Heart right ventricle (tissue), 16 donors: ENCODE measurements at regions of chr7 and their contacts with region 1.

Region 1: GRCh38 chr7:120857588-120858573 is at the start of gene TSPAN12:
- DNase-seq: peak; percentile 86 to 88
- ATAC-seq: peak; percentile 93 to 97 (median 94)
- H3K4me3 ChIP-seq: peak within 1 kb of the TSS; percentile 48 to 87 (median 72)
- H3K27ac ChIP-seq: peak within 1 kb of the TSS; percentile 88 to 98 (median 92)
- H3K4me1 ChIP-seq: peaks cover 0 to 37% (median 15%) of the 10 kb centered on the region in 9 donors
- H3K27me3 ChIP-seq: peaks cover 0 to 53% (median 0%) of the 10 kb centered on the region in 7 donors
- CTCF ChIP-seq: peak; percentile 60 to 88 (median 79)
- total RNA-seq, gene TSPAN12: 35.2 to 78.6 (median 64.5) TPM

Region 2: DNA sequence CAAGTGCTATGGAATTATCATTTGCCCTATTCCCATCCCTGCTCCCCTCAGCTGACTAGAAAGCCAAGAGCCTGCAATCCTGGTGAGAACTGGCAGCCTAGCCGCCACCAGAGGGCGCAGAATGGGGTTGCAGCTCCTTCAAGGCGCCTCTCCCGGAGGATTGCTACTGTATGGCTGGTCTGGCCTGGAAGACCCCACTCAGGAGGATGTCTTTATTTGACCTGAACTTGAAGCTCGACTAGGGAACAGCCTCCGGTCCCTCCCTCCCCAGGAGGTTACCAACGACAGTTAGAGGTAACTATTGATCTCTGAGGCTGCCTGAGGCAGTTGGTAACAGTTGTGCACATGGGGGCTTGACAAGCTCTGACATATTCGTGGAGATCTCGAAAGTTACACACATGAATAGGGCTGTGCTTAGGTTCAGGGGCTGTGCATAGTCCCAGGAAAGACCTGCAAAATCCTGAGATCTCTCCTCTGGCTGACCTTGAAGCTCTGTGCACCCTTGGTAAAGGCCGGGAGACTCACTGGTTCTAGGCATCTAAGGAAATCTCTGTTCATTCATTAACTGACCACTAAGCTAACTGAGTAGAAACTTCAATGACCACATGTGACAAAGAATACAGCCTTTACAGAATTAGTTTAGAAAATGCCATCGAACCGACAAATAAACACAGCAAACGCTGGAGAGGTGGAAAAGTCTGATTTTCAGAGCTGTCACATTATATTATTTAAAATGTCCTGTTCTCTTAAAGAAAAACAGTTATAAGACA is 65.6 kb before region 1 on chr7:
- intact Hi-C with region 1: loop called in 1 of 10 experiments (anchors 5 kb)
- DNase-seq: peak; percentile 70 to 79
- ATAC-seq: peak; percentile 74 to 93 (median 86)
- H3K4me3 ChIP-seq: no peak overlapping the region
- H3K27ac ChIP-seq: no peak overlapping the region
- H3K4me1 ChIP-seq: peaks cover 0 to 47% (median 16%) of the 10 kb centered on the region in 9 donors
- H3K27me3 ChIP-seq: no peaks in the 10 kb centered on the region
- CTCF ChIP-seq: peak; percentile 68 to 93 (median 85)

Region 3: DNA sequence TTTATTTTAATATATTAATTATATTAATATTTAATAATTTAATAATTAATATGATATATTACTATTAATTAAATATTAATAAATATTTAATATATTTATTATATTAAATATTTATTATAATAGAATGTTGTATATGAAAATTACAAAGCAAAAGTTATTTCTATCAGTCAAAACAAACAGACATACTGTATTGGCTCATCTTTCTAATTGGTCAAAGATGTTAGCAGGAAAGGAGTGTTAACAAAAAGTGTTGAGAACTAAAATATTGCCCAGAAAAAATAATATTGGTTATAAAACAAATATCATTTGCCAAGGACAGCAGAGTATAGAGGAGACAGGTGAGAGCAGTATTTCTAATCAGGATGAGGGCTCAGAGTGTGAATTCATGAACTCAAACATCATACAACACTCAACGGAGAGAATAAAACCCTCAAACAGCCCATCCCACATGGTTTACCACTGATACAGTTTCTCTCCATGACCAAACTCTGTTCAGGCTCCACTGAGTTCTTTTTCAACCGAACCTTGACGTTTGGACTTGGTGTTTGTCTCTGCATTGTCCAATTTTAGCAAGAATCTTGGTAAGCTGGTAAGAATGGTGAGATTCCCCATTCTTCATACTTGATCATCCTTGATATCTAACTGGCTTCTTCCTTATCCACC is 57.9 kb before region 1 on chr7:
- intact Hi-C with region 1: loop called in 6 of 10 experiments (anchors 5 kb)
- DNase-seq: no peak
- ATAC-seq: no peak
- H3K4me3 ChIP-seq: no peak overlapping the region
- H3K27ac ChIP-seq: no peak overlapping the region
- H3K4me1 ChIP-seq: peaks cover 0 to 27% (median 14%) of the 10 kb centered on the region in 9 donors
- H3K27me3 ChIP-seq: no peaks in the 10 kb centered on the region
- CTCF ChIP-seq: no peak

Region 4: GRCh38 chr7:120805636-120806388 is 52.1 kb before region 1 on chr7:
- intact Hi-C with region 1: loop called in 7 of 10 experiments (anchors 2 to 5 kb)
- DNase-seq: peak in 1 of 2 donors; percentile 78
- ATAC-seq: peak in 6 of 8 donors; percentile 47 to 65 (median 64)
- H3K4me3 ChIP-seq: no peak overlapping the region
- H3K27ac ChIP-seq: no peak overlapping the region
- H3K4me1 ChIP-seq: peaks cover 0 to 35% (median 17%) of the 10 kb centered on the region in 9 donors
- H3K27me3 ChIP-seq: no peaks in the 10 kb centered on the region
- CTCF ChIP-seq: peak; percentile 82 to 96 (median 87)

Region 5: GRCh38 chr7:120819863-120820262 is 38.0 kb before region 1 on chr7:
- intact Hi-C with region 1: no loop called
- DNase-seq: no peak
- ATAC-seq: no peak
- H3K4me3 ChIP-seq: no peak overlapping the region
- H3K27ac ChIP-seq: no peak overlapping the region
- H3K4me1 ChIP-seq: peaks cover 0 to 12% (median 0%) of the 10 kb centered on the region in 9 donors
- H3K27me3 ChIP-seq: no peaks in the 10 kb centered on the region
- CTCF ChIP-seq: peak in 1 of 9 donors; percentile 7

Region 6: GRCh38 chr7:120941064-120941463 is 83.2 kb after region 1 on chr7:
- intact Hi-C with region 1: loop called in 5 of 10 experiments (anchors 5 to 10 kb)
- DNase-seq: no peak
- ATAC-seq: peak in 2 of 8 donors; percentile 51 to 64
- H3K4me3 ChIP-seq: no peak overlapping the region
- H3K27ac ChIP-seq: peak overlapping the region in 2 of 10 donors; percentile 22 to 23
- H3K4me1 ChIP-seq: peaks cover 0 to 9% (median 0%) of the 10 kb centered on the region in 9 donors
- H3K27me3 ChIP-seq: no peaks in the 10 kb centered on the region
- CTCF ChIP-seq: peak in 7 of 9 donors; percentile 30 to 63 (median 51)

Region 7: GRCh38 chr7:120950539-120951308 is 92.8 kb after region 1 on chr7 and contains the start of gene ING3:
- intact Hi-C with region 1: loop called in 5 of 10 experiments (anchors 2 to 5 kb)
- DNase-seq: peak; percentile 96 to 98
- ATAC-seq: peak; percentile 98 to 99 (median 99)
- H3K4me3 ChIP-seq: peak within 1 kb of the TSS; percentile 61 to 79 (median 71)
- H3K27ac ChIP-seq: peak within 1 kb of the TSS; percentile 94 to 98 (median 96)
- H3K4me1 ChIP-seq: peaks cover 0 to 33% (median 23%) of the 10 kb centered on the region in 9 donors
- H3K27me3 ChIP-seq: no peaks in the 10 kb centered on the region
- CTCF ChIP-seq: no peak
- total RNA-seq, gene ING3: 11.8 to 18.1 (median 13.9) TPM